WTC11 (cell line): ENCODE measurements at regions of chr3 and their contacts with region 1.

Region 1: GRCh38 chr3:31132132-31132769 is 237.8 kb upstream of the GADL1 start:
- DNase-seq: no peak
- ATAC-seq: peak; percentile 61
- H3K4me3 Mint-ChIP-seq: no peak overlapping the region
- H3K27ac Mint-ChIP-seq: no peak overlapping the region
- H3K4me1 Mint-ChIP-seq: peaks cover 21% of the 10 kb centered on the region
- H3K27me3 Mint-ChIP-seq: no peaks in the 10 kb centered on the region
- CTCF ChIP-seq: peak; percentile 35; the same call in 1 of the 2 replicates

Region 2: DNA sequence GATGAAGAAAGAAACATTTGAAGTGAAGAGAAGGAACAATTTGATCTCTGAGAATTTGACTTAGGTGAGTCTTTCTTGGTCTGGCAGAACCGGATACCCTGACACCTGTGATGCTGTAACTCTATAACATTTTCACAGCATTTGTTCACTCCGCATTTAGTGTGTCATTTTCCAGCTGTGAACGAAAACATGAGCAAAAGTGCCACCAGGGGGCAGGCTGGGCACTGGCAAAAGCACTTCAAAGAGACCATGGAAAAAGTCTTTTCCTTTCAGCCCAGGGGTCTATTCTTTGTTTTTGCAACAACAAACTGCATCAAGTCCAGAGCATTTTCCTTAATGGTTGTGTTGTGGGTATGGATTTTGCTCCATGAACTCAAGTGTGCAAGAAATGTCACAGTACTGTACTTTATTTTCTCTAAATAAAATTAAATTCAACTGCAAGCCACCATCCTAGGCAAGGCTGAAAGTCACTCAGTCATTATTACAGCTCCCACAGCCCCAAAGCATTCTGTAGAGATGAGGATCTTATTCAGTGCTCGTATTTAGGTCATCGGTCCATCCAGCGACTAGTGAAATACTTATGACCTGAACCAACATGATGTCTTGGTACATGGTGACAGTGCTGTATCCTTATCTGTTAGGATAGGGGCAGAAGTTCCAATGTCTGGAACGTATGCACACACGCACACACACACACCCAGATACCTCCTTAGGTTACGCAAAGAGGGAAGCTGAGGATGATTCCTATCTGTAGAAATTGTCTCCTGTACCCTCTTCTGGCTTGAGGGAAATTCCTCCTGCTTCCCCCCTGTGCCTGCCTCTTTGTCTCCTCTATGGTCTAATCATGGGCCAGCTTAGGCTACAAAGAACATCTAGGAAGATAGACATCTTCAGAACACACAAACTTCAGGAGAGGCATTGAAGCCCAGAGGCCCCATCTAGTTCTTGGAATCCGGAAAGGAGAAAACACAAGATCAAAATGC is 363.3 kb before region 1 on chr3:
- CTCF ChIA-PET with region 1: interaction called, 11 read pairs
- POLR2A ChIA-PET with region 1: no interaction called
- DNase-seq: peak; percentile 77
- ATAC-seq: peak; percentile 62
- H3K4me3 Mint-ChIP-seq: no peak overlapping the region
- H3K27ac Mint-ChIP-seq: no peak overlapping the region
- H3K4me1 Mint-ChIP-seq: peaks cover 8% of the 10 kb centered on the region; the same call in 1 of the 2 replicates
- H3K27me3 Mint-ChIP-seq: no peaks in the 10 kb centered on the region
- CTCF ChIP-seq: peak; percentile 72

Region 3: GRCh38 chr3:30934208-30934550 is 198.1 kb before region 1 on chr3:
- CTCF ChIA-PET with region 1: interaction called, 11 read pairs
- POLR2A ChIA-PET with region 1: interaction called, 3 read pairs
- DNase-seq: no peak
- ATAC-seq: peak; percentile 59
- H3K4me3 Mint-ChIP-seq: no peak overlapping the region
- H3K27ac Mint-ChIP-seq: no peak overlapping the region
- H3K4me1 Mint-ChIP-seq: no peaks in the 10 kb centered on the region
- H3K27me3 Mint-ChIP-seq: no peaks in the 10 kb centered on the region
- CTCF ChIP-seq: no peak

Region 4: DNA sequence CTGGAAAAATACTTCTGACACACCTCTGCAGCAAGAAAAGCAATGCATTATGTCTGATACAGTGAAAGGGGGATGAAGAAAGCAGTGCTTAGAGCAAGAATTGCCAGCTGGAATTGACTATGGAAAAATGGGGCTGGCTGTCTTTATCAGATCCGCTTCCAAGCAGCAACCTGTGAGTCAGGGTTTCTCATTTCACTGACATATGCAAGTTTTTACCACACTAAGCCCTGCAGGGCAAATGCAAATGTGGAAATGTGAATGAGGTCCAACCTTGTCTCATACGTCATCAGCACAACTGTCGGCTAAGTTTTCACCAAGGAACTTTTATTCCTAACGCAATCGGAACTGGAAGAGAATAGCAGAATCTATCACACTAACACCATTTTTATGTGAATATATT is 65.2 kb before region 1 on chr3:
- CTCF ChIA-PET with region 1: no interaction called
- POLR2A ChIA-PET with region 1: no interaction called
- DNase-seq: no peak
- ATAC-seq: no peak
- H3K4me3 Mint-ChIP-seq: no peak overlapping the region
- H3K27ac Mint-ChIP-seq: no peak overlapping the region
- H3K4me1 Mint-ChIP-seq: peaks cover 14% of the 10 kb centered on the region
- H3K27me3 Mint-ChIP-seq: no peaks in the 10 kb centered on the region
- CTCF ChIP-seq: no peak